ENCODE measurements at regions of chr3 and their contacts with region 1.

Region 1: DNA sequence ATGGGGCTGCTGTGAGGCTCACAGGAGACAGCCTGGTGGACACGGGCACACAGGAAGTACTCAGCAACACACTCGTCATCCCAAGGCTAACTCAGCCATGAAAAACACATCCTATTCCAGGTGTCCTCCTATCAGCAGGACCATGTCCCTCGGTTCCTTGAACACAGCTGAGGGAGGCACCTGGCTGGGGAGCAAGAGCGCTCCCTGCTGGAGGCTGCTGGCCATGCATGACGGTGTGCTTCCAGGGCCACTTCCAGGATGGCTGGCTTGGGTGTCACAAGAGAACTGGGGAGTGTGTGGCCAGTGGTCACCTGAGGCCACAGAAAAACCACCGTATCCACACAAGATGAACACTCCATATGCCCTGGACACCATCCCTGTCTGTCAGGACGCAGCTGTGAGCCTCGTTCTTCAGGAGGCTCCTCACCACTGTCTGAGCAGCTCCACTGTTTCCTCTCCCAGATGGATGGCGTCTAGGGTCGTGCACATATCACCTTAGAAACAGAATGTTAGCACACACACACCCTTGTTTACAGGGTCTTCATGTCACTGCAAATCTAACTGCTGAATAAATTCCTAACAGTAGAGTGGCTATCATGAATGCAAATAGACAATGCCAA is 31.0 kb downstream of the POC1A start:
- DNase-seq: peak; percentile 47 to 73
- H3K4me3 ChIP-seq: no peak overlapping the region
- H3K4me3 Mint-ChIP-seq: no peak overlapping the region
- H3K27ac Mint-ChIP-seq: no peak overlapping the region
- H3K4me1 ChIP-seq: peaks cover 7% of the 10 kb centered on the region; the same call in 1 of the 2 replicates
- H3K4me1 Mint-ChIP-seq: no peaks in the 10 kb centered on the region
- H3K27me3 ChIP-seq: no peaks in the 10 kb centered on the region
- H3K27me3 Mint-ChIP-seq: no peaks in the 10 kb centered on the region
- CTCF ChIP-seq: peak; percentile 69 to 94

Region 2: GRCh38 chr3:52001443-52001974 is 121.7 kb before region 1 on chr3:
- CTCF ChIA-PET with region 1: interaction called, 6 read pairs
- POLR2A ChIA-PET with region 1: no interaction called
- intact Hi-C with region 1: loop called (anchors 1 kb)
- DNase-seq: peak; percentile 87 to 91
- H3K4me3 ChIP-seq: no peak overlapping the region
- H3K4me3 Mint-ChIP-seq: peak overlapping the region; percentile 37
- H3K27ac Mint-ChIP-seq: no peak overlapping the region
- H3K4me1 ChIP-seq: peaks cover 8% of the 10 kb centered on the region
- H3K4me1 Mint-ChIP-seq: peaks cover 9% of the 10 kb centered on the region
- H3K27me3 ChIP-seq: no peaks in the 10 kb centered on the region
- H3K27me3 Mint-ChIP-seq: no peaks in the 10 kb centered on the region
- CTCF ChIP-seq: peak; percentile 95 to 98

Region 3: GRCh38 chr3:52068055-52068571 is 55.1 kb before region 1 on chr3:
- CTCF ChIA-PET with region 1: no interaction called
- POLR2A ChIA-PET with region 1: no interaction called
- intact Hi-C with region 1: no loop called
- DNase-seq: no peak
- H3K4me3 ChIP-seq: no peak overlapping the region
- H3K4me3 Mint-ChIP-seq: no peak overlapping the region
- H3K27ac Mint-ChIP-seq: no peak overlapping the region
- H3K4me1 ChIP-seq: no peaks in the 10 kb centered on the region
- H3K4me1 Mint-ChIP-seq: no peaks in the 10 kb centered on the region
- H3K27me3 ChIP-seq: no peaks in the 10 kb centered on the region
- H3K27me3 Mint-ChIP-seq: no peaks in the 10 kb centered on the region
- CTCF ChIP-seq: no peak

Region 4: DNA sequence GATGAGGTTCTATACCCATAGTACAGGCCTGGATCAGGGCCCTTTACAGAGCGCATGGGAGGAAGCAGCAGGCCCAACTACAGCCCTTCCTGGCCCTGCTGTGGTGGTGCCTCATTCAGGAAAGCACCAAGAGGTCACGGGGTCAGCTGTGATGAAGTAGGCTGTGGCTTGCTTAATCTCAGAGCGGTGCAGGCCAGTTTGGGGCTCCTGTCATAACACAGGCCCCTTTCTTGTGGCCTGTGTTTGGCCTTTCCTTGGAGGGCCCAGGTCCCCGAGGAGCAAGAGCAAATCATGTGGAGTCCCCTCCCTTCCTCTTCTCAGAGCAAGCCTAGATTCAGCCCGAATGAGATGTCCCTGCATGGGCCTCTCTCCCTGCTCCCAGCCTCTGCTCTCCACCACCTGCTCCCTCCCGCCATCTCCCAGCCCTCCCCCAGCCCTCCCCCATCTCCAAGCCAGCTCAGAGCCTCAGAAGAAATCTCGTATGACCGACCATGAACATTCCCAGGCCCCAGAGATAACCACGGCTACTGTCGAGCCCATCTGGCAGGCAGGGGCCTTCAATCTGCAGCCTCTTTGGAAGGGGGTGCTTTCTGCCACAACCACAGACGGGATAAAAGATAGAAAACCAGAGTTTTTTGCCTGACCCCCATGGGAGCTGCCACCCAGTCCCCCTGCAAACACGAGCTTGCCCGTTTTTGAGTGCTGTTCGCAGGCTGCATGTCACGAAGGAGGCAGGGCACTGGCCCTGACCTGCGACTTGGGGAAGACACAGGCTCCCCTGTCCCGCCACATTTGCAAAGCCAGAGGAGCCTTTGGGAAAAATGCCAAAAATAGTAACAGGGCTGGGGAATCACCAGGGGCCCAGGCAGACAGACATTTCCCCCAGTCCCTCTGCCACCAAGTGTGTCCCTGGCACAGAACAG is 34.5 kb before region 1 on chr3:
- CTCF ChIA-PET with region 1: interaction called, 13 read pairs
- POLR2A ChIA-PET with region 1: no interaction called
- intact Hi-C with region 1: no loop called
- DNase-seq: no peak
- H3K4me3 ChIP-seq: no peak overlapping the region
- H3K4me3 Mint-ChIP-seq: no peak overlapping the region
- H3K27ac Mint-ChIP-seq: no peak overlapping the region
- H3K4me1 ChIP-seq: 0 out of 2 replicates have a peak, but pooled peaks cover 4% of the 10 kb centered on the region
- H3K4me1 Mint-ChIP-seq: no peaks in the 10 kb centered on the region
- H3K27me3 ChIP-seq: no peaks in the 10 kb centered on the region
- H3K27me3 Mint-ChIP-seq: no peaks in the 10 kb centered on the region
- CTCF ChIP-seq: no peak

Region 5: DNA sequence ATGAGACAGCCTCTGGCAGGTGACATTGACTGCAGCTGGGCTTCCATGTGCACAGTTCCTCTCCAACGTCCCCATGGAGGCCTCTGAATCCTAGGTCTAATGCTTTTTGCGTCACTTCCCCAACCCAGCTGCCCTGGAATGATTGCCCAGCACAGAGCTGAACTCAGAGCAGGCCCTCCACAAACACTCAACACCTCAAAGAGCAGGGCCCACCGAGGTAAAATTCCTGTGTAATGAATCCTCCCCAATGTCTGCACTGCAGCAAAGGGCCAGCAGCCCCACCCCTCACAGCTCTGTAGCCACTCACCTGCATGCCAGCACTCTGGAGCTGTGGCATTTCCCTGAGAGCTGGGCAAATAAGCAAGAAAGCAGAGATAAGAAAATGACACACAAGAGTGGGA is 24.2 kb before region 1 on chr3:
- CTCF ChIA-PET with region 1: no interaction called
- POLR2A ChIA-PET with region 1: no interaction called
- intact Hi-C with region 1: loop called (anchors 1 kb)
- DNase-seq: peak in 1 of 2 experiments; percentile 24
- H3K4me3 ChIP-seq: no peak overlapping the region
- H3K4me3 Mint-ChIP-seq: no peak overlapping the region
- H3K27ac Mint-ChIP-seq: no peak overlapping the region
- H3K4me1 ChIP-seq: no peaks in the 10 kb centered on the region
- H3K4me1 Mint-ChIP-seq: no peaks in the 10 kb centered on the region
- H3K27me3 ChIP-seq: no peaks in the 10 kb centered on the region
- H3K27me3 Mint-ChIP-seq: no peaks in the 10 kb centered on the region
- CTCF ChIP-seq: no peak

Region 6: GRCh38 chr3:52231502-52232293 is 108.5 kb after region 1 on chr3:
- CTCF ChIA-PET with region 1: no interaction called
- POLR2A ChIA-PET with region 1: no interaction called
- intact Hi-C with region 1: no loop called
- DNase-seq: peak in 1 of 2 experiments; percentile 81
- H3K4me3 ChIP-seq: no peak overlapping the region
- H3K4me3 Mint-ChIP-seq: no peak overlapping the region
- H3K27ac Mint-ChIP-seq: no peak overlapping the region
- H3K4me1 ChIP-seq: no peaks in the 10 kb centered on the region
- H3K4me1 Mint-ChIP-seq: no peaks in the 10 kb centered on the region
- H3K27me3 ChIP-seq: no peaks in the 10 kb centered on the region
- H3K27me3 Mint-ChIP-seq: no peaks in the 10 kb centered on the region
- CTCF ChIP-seq: peak; percentile 79 to 91